ENCODE measurements at regions of chr17 and their contacts with region 1.

Region 1: DNA sequence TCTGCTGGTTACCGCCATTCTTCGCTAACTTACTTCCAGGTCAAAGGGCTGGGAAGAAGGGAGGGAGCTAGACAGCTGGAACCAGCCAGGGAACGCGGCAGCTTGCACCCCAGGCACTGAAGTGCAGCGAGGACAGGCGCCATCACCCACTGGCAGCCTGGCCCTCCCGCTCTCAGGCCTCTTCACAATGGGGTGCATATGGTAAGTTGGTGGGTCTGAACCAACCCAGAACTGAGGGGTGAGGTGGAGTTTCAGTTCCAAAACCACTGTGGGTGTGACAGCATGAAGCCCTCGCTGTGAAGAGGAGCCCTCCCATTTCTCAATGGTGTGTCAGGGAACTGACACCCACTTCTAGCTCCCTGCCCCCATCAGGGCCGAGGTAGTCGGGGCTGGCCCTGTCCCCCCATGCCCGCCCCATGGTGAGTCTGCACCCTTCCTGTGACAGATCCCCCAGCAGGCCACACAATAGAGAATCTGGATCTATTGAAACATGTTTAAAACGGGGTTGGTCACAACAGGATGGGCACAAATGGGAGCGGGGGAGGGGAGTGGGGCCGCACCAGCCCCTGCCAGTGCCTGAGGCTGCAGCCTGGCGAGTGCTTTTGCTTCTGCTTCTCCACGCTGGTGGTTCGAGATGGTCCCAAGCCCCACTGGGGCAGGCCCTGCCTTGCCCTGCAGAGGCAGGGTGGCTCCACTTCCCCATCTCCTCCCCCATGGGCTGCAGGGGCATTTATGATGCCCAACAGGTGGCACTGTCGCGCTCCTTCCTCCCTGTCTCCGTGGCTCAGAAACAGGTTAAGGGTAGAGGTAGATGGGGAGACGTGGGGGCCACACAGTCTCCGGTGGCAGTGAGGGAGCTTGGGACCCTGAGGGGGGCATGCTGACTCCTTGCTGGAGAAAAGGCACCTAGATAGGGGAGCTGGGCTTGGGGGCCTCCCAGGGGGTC is 2.3 kb downstream of the LIMD2 start:
- DNase-seq: peak; percentile 73 to 93 (median 87)
- ATAC-seq: peak; percentile 32
- H3K4me3 ChIP-seq: peak overlapping the region; percentile 81 to 95
- H3K4me3 Mint-ChIP-seq: peak overlapping the region; percentile 98
- H3K27ac ChIP-seq: peak overlapping the region; percentile 65 to 82
- H3K27ac Mint-ChIP-seq: peak overlapping the region; percentile 98
- H3K4me1 ChIP-seq: peaks cover 53% of the 10 kb centered on the region
- H3K4me1 Mint-ChIP-seq: peaks cover 65% of the 10 kb centered on the region
- H3K27me3 ChIP-seq: no peaks in the 10 kb centered on the region
- H3K27me3 Mint-ChIP-seq: no peaks in the 10 kb centered on the region
- CTCF ChIP-seq: peak; percentile 84

Region 2: DNA sequence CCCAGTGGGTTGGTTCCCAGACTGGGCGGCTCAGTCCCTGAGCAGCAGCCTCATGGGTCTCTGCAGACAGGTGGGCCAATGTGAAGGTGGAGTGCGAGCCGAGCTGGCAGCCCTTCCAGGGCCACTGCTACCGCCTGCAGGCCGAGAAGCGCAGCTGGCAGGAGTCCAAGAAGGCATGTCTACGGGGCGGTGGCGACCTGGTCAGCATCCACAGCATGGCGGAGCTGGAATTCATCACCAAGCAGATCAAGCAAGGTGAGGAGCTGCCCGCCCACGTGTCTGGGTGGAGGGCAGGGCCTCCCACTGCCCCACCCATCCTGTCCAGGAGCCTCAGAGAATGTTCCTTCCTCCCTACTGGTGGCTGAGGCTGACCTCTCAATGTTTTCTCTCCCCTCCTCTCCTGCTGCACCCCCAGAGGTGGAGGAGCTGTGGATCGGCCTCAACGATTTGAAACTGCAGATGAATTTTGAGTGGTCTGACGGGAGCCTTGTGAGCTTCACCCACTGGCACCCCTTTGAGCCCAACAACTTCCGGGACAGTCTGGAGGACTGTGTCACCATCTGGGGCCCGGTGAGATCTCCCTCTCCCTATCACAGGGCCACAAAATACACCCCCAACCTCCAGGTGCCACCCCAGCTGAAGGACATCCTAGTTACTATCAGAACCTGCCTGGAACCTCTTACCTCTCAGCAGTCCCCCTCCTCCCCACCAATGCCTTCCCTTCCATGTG is 1025.9 kb before region 1 on chr17:
- CTCF ChIA-PET with region 1: no interaction called
- POLR2A ChIA-PET with region 1: no interaction called
- intact Hi-C with region 1: no loop called
- DNase-seq: no peak
- ATAC-seq: no peak
- H3K4me3 ChIP-seq: no peak overlapping the region
- H3K4me3 Mint-ChIP-seq: no peak overlapping the region
- H3K27ac ChIP-seq: no peak overlapping the region
- H3K27ac Mint-ChIP-seq: no peak overlapping the region
- H3K4me1 ChIP-seq: peaks cover 5% of the 10 kb centered on the region
- H3K4me1 Mint-ChIP-seq: peaks cover 8% of the 10 kb centered on the region
- H3K27me3 ChIP-seq: no peaks in the 10 kb centered on the region
- H3K27me3 Mint-ChIP-seq: no peaks in the 10 kb centered on the region
- CTCF ChIP-seq: no peak

Region 3: DNA sequence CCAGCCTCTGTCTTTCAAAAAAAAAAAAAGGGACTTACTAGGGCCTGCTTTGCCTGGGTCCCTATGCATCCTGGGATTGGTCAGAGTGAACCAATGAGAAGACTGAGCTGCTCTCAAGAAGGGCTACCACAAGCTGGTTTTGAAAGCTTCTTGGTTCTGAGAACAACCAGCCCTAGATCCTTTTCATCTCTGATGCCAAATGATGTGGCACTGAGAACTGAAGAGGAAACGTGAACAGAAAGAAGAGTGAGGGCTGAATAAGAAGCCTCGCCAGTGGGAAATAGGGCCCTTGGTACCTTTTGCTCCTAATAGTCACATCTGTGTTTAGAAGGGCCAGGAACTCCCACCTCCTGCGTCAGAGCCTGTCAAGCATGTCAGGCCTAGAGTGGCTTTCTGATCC is 86.3 kb before region 1 on chr17:
- CTCF ChIA-PET with region 1: interaction called, 11 read pairs
- POLR2A ChIA-PET with region 1: interaction called, 3 read pairs
- intact Hi-C with region 1: no loop called
- DNase-seq: peak in 1 of 9 experiments; percentile 37
- ATAC-seq: peak; percentile 13
- H3K4me3 ChIP-seq: no peak overlapping the region
- H3K4me3 Mint-ChIP-seq: no peak overlapping the region
- H3K27ac ChIP-seq: peak overlapping the region in 1 of 2 experiments; percentile 39
- H3K27ac Mint-ChIP-seq: peak overlapping the region; percentile 91
- H3K4me1 ChIP-seq: peaks cover 28% of the 10 kb centered on the region
- H3K4me1 Mint-ChIP-seq: peaks cover 31% of the 10 kb centered on the region
- H3K27me3 ChIP-seq: no peaks in the 10 kb centered on the region
- H3K27me3 Mint-ChIP-seq: no peaks in the 10 kb centered on the region
- CTCF ChIP-seq: no peak

Region 4: DNA sequence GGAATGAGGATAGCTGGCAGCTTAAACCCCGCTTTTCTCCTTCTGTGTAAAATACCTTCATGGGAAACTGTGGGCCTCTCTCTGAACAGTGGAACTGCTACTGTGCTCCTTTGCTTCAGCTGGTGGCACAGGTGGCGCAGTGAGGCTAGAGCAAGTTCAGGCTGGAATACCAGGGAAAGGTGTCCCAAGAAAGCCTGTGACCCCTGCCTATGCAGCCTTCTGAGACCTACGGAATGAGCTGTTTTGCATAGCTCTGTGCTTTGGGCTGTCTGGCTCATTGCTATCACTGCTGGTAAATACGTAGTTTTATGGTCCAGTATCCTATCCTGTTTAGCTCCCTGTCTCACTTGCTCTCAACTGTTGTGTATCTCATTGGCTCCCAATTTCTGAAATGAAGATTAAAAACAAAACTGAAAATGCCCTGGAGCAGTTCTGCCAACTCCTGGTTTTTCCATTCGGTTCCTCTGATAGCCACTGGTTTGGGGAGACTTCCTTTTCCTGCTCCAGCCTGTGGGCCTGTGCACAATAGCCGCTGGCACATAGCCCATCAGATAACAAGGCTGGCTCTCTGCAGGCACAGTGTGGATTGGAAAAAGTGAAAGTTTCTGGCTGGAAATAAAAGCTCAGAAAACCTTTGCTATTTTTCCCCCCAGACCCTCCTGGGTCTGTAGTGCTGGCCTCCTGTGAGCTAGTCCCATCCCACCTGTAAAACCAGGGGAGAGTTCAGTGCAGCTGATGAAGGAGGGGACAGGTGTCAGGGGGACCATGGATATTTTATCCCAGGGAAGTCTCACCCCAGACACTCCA is 21.8 kb before region 1 on chr17:
- CTCF ChIA-PET with region 1: interaction called, 8 read pairs
- POLR2A ChIA-PET with region 1: interaction called, 44 read pairs
- intact Hi-C with region 1: no loop called
- DNase-seq: no peak
- ATAC-seq: no peak
- H3K4me3 ChIP-seq: no peak overlapping the region
- H3K4me3 Mint-ChIP-seq: no peak overlapping the region
- H3K27ac ChIP-seq: no peak overlapping the region
- H3K27ac Mint-ChIP-seq: peak overlapping the region; percentile 32
- H3K4me1 ChIP-seq: no peaks in the 10 kb centered on the region
- H3K4me1 Mint-ChIP-seq: peaks cover 19% of the 10 kb centered on the region
- H3K27me3 ChIP-seq: no peaks in the 10 kb centered on the region
- H3K27me3 Mint-ChIP-seq: no peaks in the 10 kb centered on the region
- CTCF ChIP-seq: no peak

Region 5: GRCh38 chr17:63722403-63722802 is 24.8 kb after region 1 on chr17:
- CTCF ChIA-PET with region 1: no interaction called
- POLR2A ChIA-PET with region 1: interaction called, 16 read pairs
- intact Hi-C with region 1: no loop called
- DNase-seq: no peak
- ATAC-seq: no peak
- H3K4me3 ChIP-seq: no peak overlapping the region
- H3K4me3 Mint-ChIP-seq: no peak overlapping the region
- H3K27ac ChIP-seq: no peak overlapping the region
- H3K27ac Mint-ChIP-seq: no peak overlapping the region
- H3K4me1 ChIP-seq: no peaks in the 10 kb centered on the region
- H3K4me1 Mint-ChIP-seq: no peaks in the 10 kb centered on the region
- H3K27me3 ChIP-seq: no peaks in the 10 kb centered on the region
- H3K27me3 Mint-ChIP-seq: no peaks in the 10 kb centered on the region
- CTCF ChIP-seq: no peak

Region 6: DNA sequence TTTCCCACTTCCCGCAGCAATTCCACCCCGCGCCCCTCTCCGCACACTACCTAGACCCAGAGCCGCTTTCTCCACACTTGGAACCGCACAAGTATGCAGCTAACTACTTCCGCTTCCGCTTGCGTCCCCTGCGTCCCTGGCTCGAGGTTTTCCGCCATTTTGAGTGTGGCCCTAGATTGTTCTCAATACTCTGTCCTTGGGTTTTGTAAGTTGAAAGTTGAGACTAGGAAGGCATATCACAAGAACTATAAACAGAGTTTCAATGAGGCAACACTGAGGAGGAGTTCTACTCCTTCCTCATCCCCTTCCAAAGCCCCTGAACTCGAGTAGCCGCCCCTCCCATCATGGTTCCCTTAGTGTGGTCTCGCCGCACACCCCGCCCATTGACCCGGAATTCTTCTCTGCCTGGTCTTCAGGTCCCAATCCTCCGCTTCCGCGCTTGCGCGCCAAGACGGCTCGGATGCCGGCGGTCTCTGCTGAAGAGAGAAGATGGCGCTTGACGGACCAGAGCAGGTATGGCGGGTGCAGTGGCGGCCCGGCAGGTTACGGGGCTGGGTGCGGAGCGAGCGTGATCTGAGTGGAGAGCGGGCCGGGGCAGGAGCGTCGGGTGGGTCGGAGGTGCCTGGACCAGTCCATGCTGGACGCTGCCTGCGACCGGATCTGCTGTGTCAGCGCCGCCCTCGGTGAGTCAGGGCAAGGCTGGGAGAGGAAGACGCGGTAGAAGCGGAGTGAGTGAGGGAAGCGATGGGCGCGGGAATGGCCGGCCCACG is 129.6 kb after region 1 on chr17 and contains the starts of genes FTSJ3 and PSMC5:
- CTCF ChIA-PET with region 1: interaction called, 3 read pairs
- POLR2A ChIA-PET with region 1: interaction called, 8 read pairs
- intact Hi-C with region 1: loop called (anchors 1 kb)
- DNase-seq: peak; percentile 91 to 99 (median 95)
- ATAC-seq: peak; percentile 92
- H3K4me3 ChIP-seq: peak within 1 kb of the TSS; percentile 74 to 75
- H3K4me3 Mint-ChIP-seq: peak within 1 kb of the TSS; percentile 100
- H3K27ac ChIP-seq: peak within 1 kb of the TSS; percentile 66 to 96
- H3K27ac Mint-ChIP-seq: peak within 1 kb of the TSS; percentile 98
- H3K4me1 ChIP-seq: peaks cover 56% of the 10 kb centered on the region
- H3K4me1 Mint-ChIP-seq: peaks cover 81% of the 10 kb centered on the region
- H3K27me3 ChIP-seq: no peaks in the 10 kb centered on the region
- H3K27me3 Mint-ChIP-seq: no peaks in the 10 kb centered on the region
- CTCF ChIP-seq: peak; percentile 51
- total RNA-seq, gene FTSJ3: 60.0 to 70.3 TPM
- total RNA-seq, gene PSMC5: 88.5 to 90.3 TPM

Region 7: DNA sequence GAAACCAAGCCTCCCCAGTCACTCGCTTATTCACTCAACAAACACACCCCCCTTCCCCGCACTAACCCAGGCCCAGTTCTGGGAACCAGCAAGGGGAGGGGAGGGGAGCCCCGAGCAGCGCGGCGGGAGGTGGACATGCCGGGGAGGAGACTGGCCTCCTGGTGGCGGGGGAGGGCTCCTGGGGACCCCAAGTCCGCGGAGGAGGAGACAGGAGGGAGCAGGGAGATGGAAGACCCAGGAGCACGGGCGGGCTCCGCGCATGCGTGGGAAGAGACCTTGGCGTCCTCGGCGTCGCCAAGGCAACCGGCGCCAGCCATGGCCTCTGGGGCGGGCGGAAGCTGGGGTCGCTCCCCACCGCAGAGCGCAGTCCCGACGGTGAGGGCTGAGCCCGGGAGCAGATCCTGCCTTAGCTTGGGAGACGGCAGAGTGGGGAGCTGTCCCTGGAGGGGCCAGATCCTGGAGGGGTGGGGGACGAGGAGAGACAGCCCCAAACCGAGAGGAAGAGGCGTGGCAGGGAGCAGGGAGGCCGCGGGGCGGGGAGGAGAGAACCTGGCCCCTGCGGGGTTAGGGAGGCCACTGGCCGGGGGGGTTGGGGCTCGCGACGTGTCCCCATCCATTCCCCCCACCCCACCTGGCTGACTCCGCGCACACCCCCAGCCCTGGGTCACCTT is 300.6 kb after region 1 on chr17 and contains the start of gene PRR29:
- CTCF ChIA-PET with region 1: no interaction called
- POLR2A ChIA-PET with region 1: no interaction called
- intact Hi-C with region 1: loop called in 1 of 2 experiments (anchors 10 kb)
- DNase-seq: peak; percentile 56 to 90 (median 75)
- ATAC-seq: peak; percentile 69
- H3K4me3 ChIP-seq: peak within 1 kb of the TSS; percentile 64 to 78
- H3K4me3 Mint-ChIP-seq: peak within 1 kb of the TSS; percentile 89
- H3K27ac ChIP-seq: no peak within 1 kb of the TSS
- H3K27ac Mint-ChIP-seq: peak within 1 kb of the TSS; percentile 75
- H3K4me1 ChIP-seq: peaks cover 29% of the 10 kb centered on the region
- H3K4me1 Mint-ChIP-seq: peaks cover 40% of the 10 kb centered on the region
- H3K27me3 ChIP-seq: no peaks in the 10 kb centered on the region
- H3K27me3 Mint-ChIP-seq: no peaks in the 10 kb centered on the region
- CTCF ChIP-seq: no peak
- total RNA-seq, gene PRR29: 0.24 to 0.97 TPM